ENCODE measurements at regions of chr3 and their contacts with region 1.

Region 1: DNA sequence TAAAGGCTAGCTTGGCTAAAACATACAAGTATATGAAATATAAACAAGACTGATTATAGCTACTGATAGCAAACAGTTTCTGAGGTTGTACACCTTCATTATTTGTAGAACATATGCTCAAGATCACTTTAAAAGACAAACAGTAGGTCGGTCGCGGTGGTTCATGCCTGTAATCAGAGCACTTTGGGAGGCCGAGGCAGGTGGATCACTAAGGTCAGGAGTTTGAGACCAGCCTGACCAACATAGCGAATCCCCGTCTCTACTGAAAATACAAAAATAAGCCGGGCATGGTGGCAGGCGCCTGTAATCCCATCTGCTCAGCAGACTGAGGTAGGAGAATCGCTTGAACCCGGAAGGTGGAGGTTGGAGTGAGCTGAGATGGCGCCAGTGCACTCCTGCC is 80.3 kb downstream of the SMARCC1 start:
- DNase-seq: no peak
- ATAC-seq: no peak
- H3K4me3 ChIP-seq: no peak overlapping the region
- H3K27ac ChIP-seq: no peak overlapping the region
- H3K4me1 ChIP-seq: no peaks in the 10 kb centered on the region
- H3K27me3 ChIP-seq: no peaks in the 10 kb centered on the region
- CTCF ChIP-seq: no peak
- EP300 ChIP-seq: no peak
- POLR2A ChIP-seq: no peak
- RAD21 ChIP-seq: no peak

Region 2: GRCh38 chr3:47685037-47685436 is 16.4 kb before region 1 on chr3:
- CTCF ChIA-PET with region 1: no interaction called
- POLR2A ChIA-PET with region 1: interaction called, 11 read pairs
- in situ Hi-C with region 1: no loop called
- intact Hi-C with region 1: no loop called
- DNase-seq: no peak
- ATAC-seq: no peak
- H3K4me3 ChIP-seq: no peak overlapping the region
- H3K27ac ChIP-seq: no peak overlapping the region
- H3K4me1 ChIP-seq: no peaks in the 10 kb centered on the region
- H3K27me3 ChIP-seq: no peaks in the 10 kb centered on the region
- CTCF ChIP-seq: no peak
- EP300 ChIP-seq: no peak
- POLR2A ChIP-seq: no peak
- RAD21 ChIP-seq: no peak

Region 3: DNA sequence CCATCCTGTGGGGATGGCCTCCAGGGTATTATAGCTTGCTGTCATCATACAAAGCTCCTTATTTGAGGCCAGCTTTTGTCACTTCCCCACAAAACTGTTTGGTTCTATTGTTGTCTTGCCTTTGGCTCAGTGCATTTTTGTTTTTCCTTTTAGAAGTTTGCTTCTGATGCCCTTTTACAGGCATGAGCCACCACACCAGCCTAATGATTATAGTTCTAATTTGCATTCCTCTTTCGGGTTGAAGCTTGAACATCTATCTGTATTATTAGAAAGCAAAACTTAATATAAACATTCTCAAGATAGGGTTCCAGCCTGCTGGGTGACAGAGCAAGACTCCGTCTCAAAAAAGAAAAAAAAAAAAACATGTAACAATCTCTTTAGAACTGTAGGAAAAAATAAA is 40.5 kb after region 1 on chr3:
- CTCF ChIA-PET with region 1: no interaction called
- POLR2A ChIA-PET with region 1: no interaction called
- in situ Hi-C with region 1: no loop called
- intact Hi-C with region 1: no loop called
- DNase-seq: no peak
- ATAC-seq: no peak
- H3K4me3 ChIP-seq: no peak overlapping the region
- H3K27ac ChIP-seq: no peak overlapping the region
- H3K4me1 ChIP-seq: no peaks in the 10 kb centered on the region; a peak in 1 of 5 replicates
- H3K27me3 ChIP-seq: no peaks in the 10 kb centered on the region
- CTCF ChIP-seq: no peak
- EP300 ChIP-seq: no peak
- POLR2A ChIP-seq: no peak
- RAD21 ChIP-seq: no peak